IMR-90 (cell line): ENCODE measurements at regions of chrX and their contacts with region 1.

Region 1: GRCh38 chrX:22135994-22136684 is 104.0 kb downstream of the PHEX start:
- DNase-seq: peak; percentile 60
- ATAC-seq: peak; percentile 48
- H3K4me3 ChIP-seq: no peak overlapping the region
- H3K27ac ChIP-seq: peak overlapping the region; percentile 96; the same call in 1 of the 2 replicates
- H3K4me1 ChIP-seq: peaks cover 7% of the 10 kb centered on the region
- H3K27me3 ChIP-seq: peaks cover 1% of the 10 kb centered on the region; the same call in 1 of the 2 replicates
- CTCF ChIP-seq: peak; percentile 67
- POLR2A ChIP-seq: no peak
- RAD21 ChIP-seq: peak; percentile 71

Region 2: GRCh38 chrX:21985332-21985777 is 150.8 kb before region 1 on chrX:
- CTCF ChIA-PET with region 1: interaction called, 6 read pairs
- POLR2A ChIA-PET with region 1: no interaction called
- dilution Hi-C with region 1: no loop called
- in situ Hi-C with region 1: no loop called
- intact Hi-C with region 1: loop called (anchors 2 kb)
- DNase-seq: peak; percentile 82
- ATAC-seq: peak; percentile 97
- H3K4me3 ChIP-seq: no peak overlapping the region
- H3K27ac ChIP-seq: no peak overlapping the region
- H3K4me1 ChIP-seq: 0 out of 2 replicates have a peak, but pooled peaks cover 2% of the 10 kb centered on the region
- H3K27me3 ChIP-seq: no peaks in the 10 kb centered on the region
- CTCF ChIP-seq: peak; percentile 99
- POLR2A ChIP-seq: no peak
- RAD21 ChIP-seq: peak; percentile 86

Region 3: DNA sequence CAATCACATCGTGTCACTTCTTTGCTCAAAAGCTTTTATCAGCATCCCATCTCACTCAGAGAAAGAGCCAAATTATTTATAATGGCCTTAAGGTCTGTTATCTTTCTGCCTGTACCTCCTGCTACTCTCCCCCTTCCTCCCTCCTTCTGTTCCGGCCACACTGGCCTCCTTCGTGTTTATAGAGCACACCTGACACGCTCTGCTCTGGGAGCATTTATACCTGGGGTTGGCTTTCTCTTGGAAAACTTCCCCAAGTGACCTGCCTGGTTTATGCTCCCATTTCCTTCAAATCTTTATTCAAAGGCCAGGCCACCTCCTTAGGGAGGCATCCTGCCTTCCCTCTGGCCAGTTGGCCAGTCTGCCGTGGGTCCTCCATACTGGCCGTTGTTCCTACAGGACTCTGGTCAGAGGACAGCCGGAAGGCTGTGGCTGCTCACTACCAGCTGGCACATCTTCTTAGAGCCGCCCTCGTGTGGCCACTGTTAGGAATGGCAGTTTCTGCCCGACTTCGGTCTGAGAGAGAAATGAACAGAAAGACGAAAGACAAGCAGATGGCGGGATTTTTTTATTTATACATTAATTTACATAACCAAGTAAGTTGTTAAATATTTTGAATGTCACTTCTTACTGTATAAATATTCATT is 56.4 kb after region 1 on chrX:
- CTCF ChIA-PET with region 1: interaction called, 3 read pairs
- POLR2A ChIA-PET with region 1: no interaction called
- dilution Hi-C with region 1: no loop called
- in situ Hi-C with region 1: no loop called
- intact Hi-C with region 1: loop called (anchors 1 kb)
- DNase-seq: peak; percentile 56
- ATAC-seq: peak; percentile 94
- H3K4me3 ChIP-seq: no peak overlapping the region
- H3K27ac ChIP-seq: no peak overlapping the region
- H3K4me1 ChIP-seq: no peaks in the 10 kb centered on the region
- H3K27me3 ChIP-seq: no peaks in the 10 kb centered on the region; the same call in 1 of the 2 replicates
- CTCF ChIP-seq: peak; percentile 70
- POLR2A ChIP-seq: no peak
- RAD21 ChIP-seq: peak; percentile 68

Region 4: DNA sequence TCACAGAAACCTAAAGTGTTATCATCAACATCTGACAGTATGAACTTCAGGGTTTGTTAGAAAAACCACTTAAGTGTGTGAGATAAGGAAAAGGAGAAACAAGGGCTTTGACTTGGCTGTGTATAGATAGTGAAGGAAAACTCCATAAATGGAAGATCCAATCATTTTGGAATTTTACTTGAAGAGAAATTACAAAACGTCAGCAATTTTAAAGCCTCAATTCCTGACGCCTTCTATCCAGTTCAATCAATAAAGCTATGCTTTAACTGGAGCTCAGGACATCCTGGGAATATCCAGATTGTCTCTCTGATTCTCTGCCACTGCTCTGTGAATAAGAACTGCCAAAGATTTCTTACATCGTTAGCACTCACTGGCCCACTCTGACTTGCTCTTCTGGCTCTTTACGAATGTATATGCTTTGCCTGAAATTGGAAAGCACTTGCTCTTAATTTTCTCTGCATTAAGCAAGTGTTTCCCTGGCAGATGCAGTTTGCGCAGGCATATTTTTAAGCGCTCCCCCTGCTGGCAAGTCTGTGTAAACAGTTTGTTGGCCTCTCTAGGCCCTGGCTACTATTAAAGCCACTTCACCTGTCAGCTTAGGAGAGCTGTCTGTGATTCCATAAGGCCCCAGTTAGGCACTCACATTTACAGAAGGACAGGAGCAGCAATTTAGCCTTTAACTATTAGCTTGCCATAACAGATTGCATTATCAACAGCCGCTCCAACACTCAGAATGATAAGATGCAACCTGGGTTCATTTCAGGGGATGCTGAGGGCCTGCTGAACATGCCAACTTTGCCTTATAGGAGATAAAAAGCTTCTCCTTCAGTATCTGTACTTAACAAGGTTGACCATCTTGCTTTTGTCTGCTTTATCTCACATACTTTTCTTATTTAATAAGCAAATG is 612.2 kb after region 1 on chrX:
- CTCF ChIA-PET with region 1: interaction called, 6 read pairs
- POLR2A ChIA-PET with region 1: no interaction called
- dilution Hi-C with region 1: no loop called
- in situ Hi-C with region 1: no loop called
- intact Hi-C with region 1: loop called (anchors 1 kb)
- DNase-seq: peak; percentile 47
- ATAC-seq: peak; percentile 61; the same call in 1 of the 2 replicates
- H3K4me3 ChIP-seq: no peak overlapping the region
- H3K27ac ChIP-seq: no peak overlapping the region
- H3K4me1 ChIP-seq: peaks cover 2% of the 10 kb centered on the region; the same call in 1 of the 2 replicates
- H3K27me3 ChIP-seq: no peaks in the 10 kb centered on the region
- CTCF ChIP-seq: peak; percentile 63
- POLR2A ChIP-seq: no peak
- RAD21 ChIP-seq: peak; percentile 62

Region 5: GRCh38 chrX:23317799-23318724 is 1181.9 kb after region 1 on chrX:
- CTCF ChIA-PET with region 1: no interaction called
- POLR2A ChIA-PET with region 1: no interaction called
- dilution Hi-C with region 1: no loop called
- in situ Hi-C with region 1: no loop called
- intact Hi-C with region 1: loop called (anchors 1 kb)
- DNase-seq: no peak
- ATAC-seq: peak; percentile 80
- H3K4me3 ChIP-seq: no peak overlapping the region
- H3K27ac ChIP-seq: no peak overlapping the region
- H3K4me1 ChIP-seq: no peaks in the 10 kb centered on the region
- H3K27me3 ChIP-seq: no peaks in the 10 kb centered on the region
- CTCF ChIP-seq: peak; percentile 52
- POLR2A ChIP-seq: no peak
- RAD21 ChIP-seq: peak; percentile 56

Region 6: DNA sequence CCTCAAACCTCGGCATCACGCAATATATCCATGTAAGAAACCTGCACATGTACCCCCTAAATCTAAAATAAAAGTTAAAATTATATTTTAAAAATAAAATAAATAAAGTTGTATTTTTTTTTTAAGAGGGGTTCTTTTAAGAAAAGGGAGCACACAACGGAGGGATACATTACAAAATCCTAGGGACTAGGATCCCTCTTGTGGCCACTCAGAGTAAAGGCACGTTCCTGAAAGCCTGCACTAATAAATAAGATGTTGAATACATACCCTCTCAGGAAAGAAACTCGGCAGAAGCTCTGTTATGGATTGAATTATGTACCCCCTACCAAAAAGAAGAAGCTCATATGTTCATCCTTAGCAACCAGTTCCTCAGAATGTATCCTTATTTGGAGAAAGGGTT is 1480.2 kb after region 1 on chrX:
- CTCF ChIA-PET with region 1: interaction called, 9 read pairs
- POLR2A ChIA-PET with region 1: no interaction called
- dilution Hi-C with region 1: no loop called
- in situ Hi-C with region 1: no loop called
- intact Hi-C with region 1: loop called (anchors 2 kb)
- DNase-seq: peak; percentile 38
- ATAC-seq: peak; percentile 79
- H3K4me3 ChIP-seq: no peak overlapping the region
- H3K27ac ChIP-seq: no peak overlapping the region
- H3K4me1 ChIP-seq: no peaks in the 10 kb centered on the region
- H3K27me3 ChIP-seq: peaks cover 2% of the 10 kb centered on the region
- CTCF ChIP-seq: peak; percentile 55
- POLR2A ChIP-seq: no peak
- RAD21 ChIP-seq: peak; percentile 54